Activated CD4-positive, alpha-beta memory T cell treated with anti-CD3 and anti-CD28 coated beads for 36 hours (primary cell): ENCODE measurements at regions of chr6 and their contacts with region 1.

Region 1: GRCh38 chr6:5302995-5303622 is 41.8 kb downstream of the FARS2 start:
- DNase-seq: peak; percentile 81
- H3K4me3 Mint-ChIP-seq: peak overlapping the region; percentile 59
- H3K27ac Mint-ChIP-seq: peak overlapping the region; percentile 87
- H3K4me1 Mint-ChIP-seq: peaks cover 57% of the 10 kb centered on the region
- H3K27me3 Mint-ChIP-seq: no peaks in the 10 kb centered on the region

Region 2: GRCh38 chr6:5143634-5144311 is 159.3 kb before region 1 on chr6:
- CTCF ChIA-PET with region 1: interaction called, 77 read pairs
- POLR2A ChIA-PET with region 1: no interaction called
- intact Hi-C with region 1: loop called (anchors 1 kb)
- DNase-seq: peak; percentile 86
- H3K4me3 Mint-ChIP-seq: no peak overlapping the region
- H3K27ac Mint-ChIP-seq: no peak overlapping the region
- H3K4me1 Mint-ChIP-seq: no peaks in the 10 kb centered on the region
- H3K27me3 Mint-ChIP-seq: no peaks in the 10 kb centered on the region

Region 3: DNA sequence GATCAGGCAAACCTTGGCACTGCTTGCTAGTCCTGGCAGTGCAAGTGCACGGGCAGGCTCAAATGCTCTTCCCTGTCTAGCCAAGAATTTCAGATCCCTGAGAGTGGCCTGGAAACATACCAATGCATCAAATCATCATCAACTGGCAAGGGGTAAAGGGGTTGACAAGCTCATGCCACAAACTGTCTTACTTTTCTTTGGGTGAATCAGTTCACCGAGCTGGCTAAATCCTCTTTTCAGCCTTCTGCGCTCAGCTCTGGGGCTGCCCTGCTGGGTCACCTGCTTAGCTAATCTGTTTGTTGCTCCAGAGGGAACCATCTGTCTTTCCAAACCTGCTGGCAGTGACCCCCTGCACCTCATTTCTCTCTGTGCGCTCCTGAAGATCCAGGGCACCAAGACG is 101.8 kb before region 1 on chr6:
- CTCF ChIA-PET with region 1: interaction called, 5 read pairs
- POLR2A ChIA-PET with region 1: interaction called, 5 read pairs
- intact Hi-C with region 1: loop called (anchors 1 kb)
- DNase-seq: no peak
- H3K4me3 Mint-ChIP-seq: no peak overlapping the region
- H3K27ac Mint-ChIP-seq: no peak overlapping the region
- H3K4me1 Mint-ChIP-seq: peaks cover 25% of the 10 kb centered on the region
- H3K27me3 Mint-ChIP-seq: no peaks in the 10 kb centered on the region

Region 4: GRCh38 chr6:5260661-5261544 is 42.2 kb before region 1 on chr6 and contains the starts of genes FARS2 and LYRM4:
- CTCF ChIA-PET with region 1: interaction called, 50 read pairs
- POLR2A ChIA-PET with region 1: interaction called, 30 read pairs
- intact Hi-C with region 1: loop called (anchors 1 kb)
- DNase-seq: peak; percentile 93
- H3K4me3 Mint-ChIP-seq: peak within 1 kb of the TSS; percentile 98
- H3K27ac Mint-ChIP-seq: peak within 1 kb of the TSS; percentile 99
- H3K4me1 Mint-ChIP-seq: peaks cover 36% of the 10 kb centered on the region
- H3K27me3 Mint-ChIP-seq: no peaks in the 10 kb centered on the region
- total RNA-seq, gene FARS2: 22.7 to 23.7 TPM
- total RNA-seq, gene LYRM4: 50.6 to 53.6 TPM

Region 5: DNA sequence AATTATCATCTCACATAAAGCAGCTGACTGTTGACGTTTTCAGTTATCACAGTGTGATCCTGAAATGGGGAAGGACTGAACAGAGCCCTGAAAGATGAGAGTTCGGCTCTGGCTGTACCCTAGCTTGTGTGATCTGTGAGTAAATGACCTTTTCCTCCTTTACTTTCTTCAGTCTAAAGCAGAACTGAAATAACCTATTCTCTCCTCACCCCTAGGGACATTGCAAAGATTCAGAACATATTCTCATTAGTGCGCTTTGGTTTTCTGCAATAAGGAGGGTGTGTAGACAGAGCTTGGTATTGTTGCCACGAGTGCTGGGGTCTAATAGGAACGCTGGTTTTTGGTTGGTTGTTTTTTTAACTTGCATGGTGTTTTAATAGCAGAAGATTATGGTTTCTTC is 25.1 kb before region 1 on chr6:
- CTCF ChIA-PET with region 1: interaction called, 34 read pairs
- POLR2A ChIA-PET with region 1: interaction called, 36 read pairs
- intact Hi-C with region 1: loop called (anchors 1 kb)
- DNase-seq: no peak
- H3K4me3 Mint-ChIP-seq: no peak overlapping the region
- H3K27ac Mint-ChIP-seq: peak overlapping the region; percentile 55
- H3K4me1 Mint-ChIP-seq: peaks cover 76% of the 10 kb centered on the region
- H3K27me3 Mint-ChIP-seq: no peaks in the 10 kb centered on the region

Region 6: DNA sequence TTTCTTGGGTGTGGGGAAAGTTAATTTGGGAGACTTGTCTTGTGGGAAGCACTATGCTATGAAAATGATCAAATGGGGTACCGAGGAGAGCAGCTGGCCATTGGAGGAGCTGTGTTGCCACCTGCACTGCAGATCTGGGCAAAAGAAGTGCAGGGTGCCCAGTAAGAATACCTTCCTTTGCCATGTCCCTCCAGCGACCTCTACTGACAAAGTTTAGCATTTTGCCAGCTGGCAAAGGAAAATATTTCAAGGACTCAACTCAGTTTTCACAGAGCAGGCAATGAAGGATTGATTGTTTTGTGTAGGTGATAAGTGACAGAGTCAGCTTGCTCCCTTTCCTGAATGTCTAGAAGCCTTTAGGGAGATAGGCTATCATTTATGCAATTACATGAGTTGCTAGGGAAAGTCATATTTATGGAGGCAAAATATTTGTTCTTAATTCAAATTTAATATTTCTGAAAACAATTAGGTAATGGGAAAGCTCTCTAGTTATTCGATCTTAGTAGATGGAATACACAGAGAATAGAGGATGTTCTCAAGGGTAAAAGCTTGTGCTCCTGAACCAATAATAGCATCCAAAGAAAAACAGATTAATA is 76.6 kb after region 1 on chr6:
- CTCF ChIA-PET with region 1: interaction called, 15 read pairs
- POLR2A ChIA-PET with region 1: no interaction called
- intact Hi-C with region 1: no loop called
- DNase-seq: peak; percentile 43
- H3K4me3 Mint-ChIP-seq: no peak overlapping the region
- H3K27ac Mint-ChIP-seq: no peak overlapping the region
- H3K4me1 Mint-ChIP-seq: no peaks in the 10 kb centered on the region
- H3K27me3 Mint-ChIP-seq: no peaks in the 10 kb centered on the region

Region 7: GRCh38 chr6:5584078-5584482 is 281.0 kb after region 1 on chr6:
- CTCF ChIA-PET with region 1: no interaction called
- POLR2A ChIA-PET with region 1: no interaction called
- intact Hi-C with region 1: no loop called
- DNase-seq: no peak
- H3K4me3 Mint-ChIP-seq: no peak overlapping the region
- H3K27ac Mint-ChIP-seq: no peak overlapping the region
- H3K4me1 Mint-ChIP-seq: peaks cover 4% of the 10 kb centered on the region
- H3K27me3 Mint-ChIP-seq: no peaks in the 10 kb centered on the region